Calu3 (cell line): ENCODE measurements at regions of chr6 and their contacts with region 1.

Region 1: GRCh38 chr6:154995284-154996015 is at the start of gene TIAM2:
- DNase-seq: peak; percentile 28
- H3K4me3 Mint-ChIP-seq: peak within 1 kb of the TSS; percentile 60
- H3K27ac Mint-ChIP-seq: no peak within 1 kb of the TSS
- H3K4me1 Mint-ChIP-seq: peaks cover 28% of the 10 kb centered on the region
- H3K27me3 Mint-ChIP-seq: no peaks in the 10 kb centered on the region
- CTCF ChIP-seq: no peak
- total RNA-seq, gene TIAM2: 7.1 and 12.9 TPM in 2 replicates

Region 2: DNA sequence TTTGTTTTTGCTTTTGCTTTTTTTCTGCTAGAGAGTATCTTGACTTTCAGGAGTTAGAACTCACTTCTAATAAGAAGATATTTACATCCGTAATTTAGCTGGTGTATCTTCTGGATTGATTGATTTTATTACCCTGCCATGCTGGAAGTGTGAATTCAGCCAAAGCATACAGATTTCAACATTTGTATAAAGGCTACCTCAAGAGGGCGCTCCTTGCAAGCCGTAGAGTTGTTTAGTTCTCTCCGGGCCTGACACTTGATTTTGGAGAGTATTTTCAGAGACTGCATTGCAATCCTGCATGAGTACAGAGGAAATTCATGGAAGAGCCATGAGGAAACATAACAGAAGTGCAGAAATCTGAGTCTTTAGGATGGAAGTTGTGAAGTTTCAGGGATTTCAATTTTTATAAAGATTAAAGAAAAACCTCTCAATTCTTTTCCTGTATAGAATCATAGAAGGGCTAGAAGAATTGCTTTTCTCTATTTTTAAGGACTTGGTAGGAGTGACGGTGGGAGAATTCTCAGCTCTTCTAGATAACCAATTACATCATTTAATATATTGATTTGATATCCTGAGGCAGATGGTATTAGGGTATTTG is 67.0 kb before region 1 on chr6:
- CTCF ChIA-PET with region 1: interaction called, 3 read pairs
- intact Hi-C with region 1: loop called (anchors 10 kb)
- DNase-seq: peak; percentile 69
- H3K4me3 Mint-ChIP-seq: no peak overlapping the region
- H3K27ac Mint-ChIP-seq: no peak overlapping the region
- H3K4me1 Mint-ChIP-seq: peaks cover 29% of the 10 kb centered on the region
- H3K27me3 Mint-ChIP-seq: no peaks in the 10 kb centered on the region
- CTCF ChIP-seq: peak; percentile 34

Region 3: GRCh38 chr6:154962753-154963152 is 32.7 kb before region 1 on chr6:
- CTCF ChIA-PET with region 1: no interaction called
- intact Hi-C with region 1: loop called (anchors 2 kb)
- DNase-seq: peak; percentile 46
- H3K4me3 Mint-ChIP-seq: no peak overlapping the region
- H3K27ac Mint-ChIP-seq: peak overlapping the region; percentile 71
- H3K4me1 Mint-ChIP-seq: peaks cover 28% of the 10 kb centered on the region
- H3K27me3 Mint-ChIP-seq: no peaks in the 10 kb centered on the region
- CTCF ChIP-seq: no peak

Region 4: DNA sequence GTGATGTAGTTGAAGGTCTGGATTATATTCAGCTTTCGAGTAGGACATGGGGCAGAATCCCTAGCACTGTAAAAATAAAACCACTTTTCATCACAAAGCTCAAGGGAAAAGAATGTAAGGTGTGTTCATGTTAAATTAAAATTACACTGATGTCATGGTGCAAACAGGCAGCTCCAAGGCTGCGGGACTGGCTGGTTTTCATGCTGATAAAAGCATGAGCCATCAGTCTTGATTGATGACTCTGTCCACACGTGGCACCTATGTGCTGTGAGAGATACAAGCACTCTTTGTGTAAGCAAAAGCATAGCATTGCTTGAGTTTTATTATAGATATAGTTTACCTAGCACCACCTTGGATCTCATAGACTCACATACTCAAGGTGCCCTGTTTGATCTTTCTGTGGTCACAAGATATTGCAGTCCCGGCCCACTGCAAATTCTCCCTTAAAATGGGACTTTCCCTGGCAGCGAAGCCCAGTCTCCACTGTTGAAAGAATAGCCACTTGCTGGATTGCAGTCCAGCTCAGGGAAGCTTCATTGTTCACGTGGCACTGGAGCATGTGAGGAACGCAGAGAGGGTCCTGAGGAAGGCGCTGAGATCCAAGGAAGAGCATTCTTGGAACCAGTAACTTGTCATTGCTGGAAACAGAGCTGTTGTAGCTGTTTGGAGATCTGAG is 90.3 kb after region 1 on chr6:
- CTCF ChIA-PET with region 1: no interaction called
- intact Hi-C with region 1: loop called (anchors 5 kb)
- DNase-seq: peak; percentile 76
- H3K4me3 Mint-ChIP-seq: peak overlapping the region; percentile 40
- H3K27ac Mint-ChIP-seq: peak overlapping the region; percentile 66
- H3K4me1 Mint-ChIP-seq: peaks cover 31% of the 10 kb centered on the region
- H3K27me3 Mint-ChIP-seq: no peaks in the 10 kb centered on the region
- CTCF ChIP-seq: no peak

Region 5: DNA sequence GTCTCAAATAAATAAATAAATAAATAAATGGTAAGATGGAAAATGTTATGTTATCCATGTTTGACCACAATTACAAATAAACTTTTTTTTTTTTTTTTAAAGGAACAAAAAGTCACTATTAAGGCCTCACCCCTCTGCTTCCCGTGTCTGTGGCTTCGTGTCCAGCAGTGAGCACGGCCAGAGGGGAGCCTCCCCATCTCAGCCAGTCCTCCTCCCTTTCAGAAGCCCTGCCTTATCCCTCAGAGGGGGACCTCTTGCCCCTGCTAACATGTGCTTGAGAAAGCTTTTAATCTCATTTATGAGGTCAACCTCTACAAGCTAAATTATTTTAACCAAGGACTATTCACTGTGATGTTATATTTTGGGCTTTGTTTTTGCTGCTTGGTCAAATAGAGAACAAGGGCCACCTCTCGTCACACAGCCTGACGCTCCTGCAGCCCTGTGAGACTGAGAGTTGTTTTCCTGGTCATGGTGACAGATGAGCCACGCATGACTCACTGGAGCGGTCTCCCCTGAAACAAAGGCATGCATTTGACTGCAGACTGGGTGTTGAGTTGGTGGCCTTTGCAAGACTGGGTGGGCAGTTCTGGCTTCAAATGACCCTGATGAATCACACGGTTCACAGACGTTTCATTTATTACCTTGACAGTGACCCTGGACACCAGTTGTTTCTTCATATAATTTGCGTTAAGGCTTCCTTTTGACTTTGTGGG is 131.4 kb after region 1 on chr6:
- CTCF ChIA-PET with region 1: no interaction called
- intact Hi-C with region 1: loop called (anchors 5 kb)
- DNase-seq: peak; percentile 80
- H3K4me3 Mint-ChIP-seq: peak overlapping the region; percentile 50
- H3K27ac Mint-ChIP-seq: peak overlapping the region; percentile 97
- H3K4me1 Mint-ChIP-seq: peaks cover 37% of the 10 kb centered on the region
- H3K27me3 Mint-ChIP-seq: no peaks in the 10 kb centered on the region
- CTCF ChIP-seq: no peak